MCF 10A (cell line): ENCODE measurements at regions of chr19 and their contacts with region 1.

Region 1: DNA sequence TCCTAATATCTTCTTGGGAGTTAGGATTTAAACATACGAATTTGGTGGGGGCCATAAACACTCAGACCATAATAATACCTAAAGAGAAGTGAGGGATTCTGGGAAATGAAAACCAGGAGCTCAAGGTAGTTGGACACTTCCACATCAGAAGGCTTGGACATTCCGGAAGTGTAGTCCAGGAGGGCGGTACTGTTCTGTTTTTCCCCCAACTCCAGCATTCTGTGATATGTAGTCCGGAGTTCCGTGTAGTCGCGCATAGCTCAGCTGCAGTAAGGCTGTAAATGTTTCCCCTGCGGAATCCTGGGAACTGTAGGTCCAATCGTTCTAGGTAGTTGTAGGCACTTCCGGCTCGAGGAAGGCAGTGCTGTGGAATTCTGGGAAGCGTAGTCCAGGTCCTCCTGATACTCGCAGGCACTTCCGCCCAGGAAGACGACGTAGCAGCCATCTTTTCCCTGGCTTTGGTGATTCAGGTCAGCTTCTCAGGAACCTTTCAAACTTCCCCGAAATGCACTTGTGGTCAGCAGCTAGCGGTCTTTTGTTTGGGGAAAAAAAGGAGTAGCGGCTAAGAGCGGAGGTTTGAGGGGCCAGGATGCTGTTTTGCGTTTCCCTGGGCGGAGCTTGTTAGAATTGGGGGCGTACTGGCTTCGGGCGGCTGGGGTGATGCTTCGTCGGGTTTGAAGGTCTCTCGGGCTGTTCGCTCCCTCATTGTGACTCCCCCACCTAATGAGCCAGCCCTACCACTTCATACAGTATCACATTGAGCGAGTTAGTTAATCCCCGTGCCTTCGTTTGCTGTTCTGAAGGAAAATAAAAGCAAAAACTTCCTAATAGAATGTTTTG is at the start of gene ZNF226:
- DNase-seq: peak; percentile 98
- H3K4me3 Mint-ChIP-seq: peak within 1 kb of the TSS; percentile 98
- H3K27ac Mint-ChIP-seq: peak within 1 kb of the TSS; percentile 96
- H3K4me1 Mint-ChIP-seq: peaks cover 9% of the 10 kb centered on the region
- H3K27me3 Mint-ChIP-seq: no peaks in the 10 kb centered on the region
- CTCF ChIP-seq: no peak
- total RNA-seq, gene ZNF226: 23.4 and 32.5 TPM in 2 replicates

Region 2: DNA sequence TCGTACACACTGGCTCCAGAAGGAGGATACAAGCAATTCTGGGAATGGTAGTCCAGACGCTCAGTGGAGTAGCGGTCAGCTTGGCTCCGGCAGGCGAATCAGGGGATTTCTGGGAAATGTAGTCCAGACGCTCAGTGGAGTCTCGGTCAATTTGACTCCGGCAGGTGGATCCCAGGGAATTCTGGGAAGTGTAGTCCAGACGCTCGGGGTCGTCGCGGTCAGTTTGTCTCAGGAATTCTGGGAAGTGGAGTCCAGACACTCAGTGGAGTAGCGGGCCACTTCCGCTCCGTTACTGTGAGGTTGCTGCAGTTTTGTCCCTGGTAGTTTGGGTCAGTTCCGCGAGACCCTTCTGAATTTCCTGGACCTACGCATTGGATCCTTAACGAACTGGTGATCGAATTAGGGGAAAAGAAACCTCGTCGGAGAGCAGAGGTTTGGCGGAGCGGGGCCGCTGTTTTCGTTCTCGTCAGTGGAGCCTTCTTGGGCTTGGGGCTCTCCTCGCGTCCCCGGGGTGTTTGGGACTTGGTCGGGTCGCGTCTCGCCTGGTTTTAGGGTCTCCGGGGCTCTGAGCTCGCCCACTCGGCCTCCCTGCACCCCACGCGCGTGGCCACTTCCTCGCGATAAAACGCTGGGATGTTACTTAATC is 51.6 kb before region 1 on chr19 and contains the start of gene ZNF225:
- CTCF ChIA-PET with region 1: no interaction called
- POLR2A ChIA-PET with region 1: interaction called, 23 read pairs
- intact Hi-C with region 1: no loop called
- DNase-seq: peak; percentile 99
- H3K4me3 Mint-ChIP-seq: peak within 1 kb of the TSS; percentile 86
- H3K27ac Mint-ChIP-seq: peak within 1 kb of the TSS; percentile 57
- H3K4me1 Mint-ChIP-seq: peaks cover 6% of the 10 kb centered on the region
- H3K27me3 Mint-ChIP-seq: no peaks in the 10 kb centered on the region
- CTCF ChIP-seq: no peak
- total RNA-seq, gene ZNF225: 3.6 and 5.7 TPM in 2 replicates

Region 3: DNA sequence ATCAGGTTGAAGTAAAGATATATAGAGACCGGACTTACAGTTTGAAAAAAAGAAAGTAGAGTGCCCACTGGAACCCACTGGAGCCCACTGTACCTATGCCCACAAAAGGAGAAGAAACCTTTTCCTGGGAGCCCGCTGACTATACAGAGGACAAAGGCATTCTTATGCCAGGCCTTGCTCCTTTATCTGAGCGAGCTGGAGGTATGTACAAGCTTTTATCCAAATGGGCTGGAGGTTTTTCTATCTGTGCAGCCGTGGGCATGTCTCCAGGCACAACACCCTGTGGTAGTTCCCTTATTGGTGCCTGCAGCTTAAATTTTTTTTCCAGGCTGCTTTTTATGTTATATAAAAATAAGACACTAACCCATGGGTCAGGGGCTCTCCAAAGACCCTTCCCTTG is 15.1 kb before region 1 on chr19:
- CTCF ChIA-PET with region 1: no interaction called
- POLR2A ChIA-PET with region 1: interaction called, 10 read pairs
- intact Hi-C with region 1: no loop called
- DNase-seq: no peak
- H3K4me3 Mint-ChIP-seq: no peak overlapping the region
- H3K27ac Mint-ChIP-seq: no peak overlapping the region
- H3K4me1 Mint-ChIP-seq: no peaks in the 10 kb centered on the region
- H3K27me3 Mint-ChIP-seq: no peaks in the 10 kb centered on the region
- CTCF ChIP-seq: no peak

Region 4: DNA sequence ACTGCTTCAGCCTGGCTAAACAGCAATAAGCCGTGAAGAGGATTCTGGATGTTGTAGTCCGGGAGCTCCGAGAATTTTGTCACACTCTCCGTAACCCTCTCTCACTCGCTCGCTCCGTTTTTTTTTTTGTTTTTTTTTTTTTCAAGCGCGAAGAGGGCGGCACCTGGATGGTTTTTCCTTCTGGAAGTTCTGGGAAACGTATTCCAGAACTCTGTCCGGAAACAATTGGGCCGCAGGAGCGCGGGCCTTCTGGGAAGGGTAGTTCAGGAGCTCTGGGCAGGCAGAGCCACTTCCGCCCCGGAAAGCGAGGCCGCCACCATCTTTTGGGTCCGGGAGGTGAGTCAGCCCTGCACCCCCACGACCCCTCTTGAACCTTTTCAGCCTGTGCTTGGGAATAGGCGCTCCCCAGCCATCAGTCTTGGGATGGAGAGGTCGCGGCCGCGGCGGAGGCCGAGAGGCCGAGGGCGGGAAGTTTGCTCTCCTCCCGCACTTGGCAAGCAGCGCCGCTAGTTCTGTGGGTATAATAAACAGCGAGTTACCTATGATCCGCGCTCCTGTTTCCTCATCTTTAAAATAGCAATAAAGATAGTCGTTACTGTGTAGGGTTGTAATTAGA is 47.5 kb after region 1 on chr19 and contains the start of gene ZNF227:
- CTCF ChIA-PET with region 1: interaction called, 3 read pairs
- POLR2A ChIA-PET with region 1: interaction called, 42 read pairs
- intact Hi-C with region 1: loop called (anchors 1 kb)
- DNase-seq: peak; percentile 96
- H3K4me3 Mint-ChIP-seq: peak within 1 kb of the TSS; percentile 94
- H3K27ac Mint-ChIP-seq: peak within 1 kb of the TSS; percentile 92
- H3K4me1 Mint-ChIP-seq: peaks cover 9% of the 10 kb centered on the region
- H3K27me3 Mint-ChIP-seq: no peaks in the 10 kb centered on the region
- CTCF ChIP-seq: no peak
- total RNA-seq, gene ZNF227: 22.6 and 29.0 TPM in 2 replicates

Region 5: DNA sequence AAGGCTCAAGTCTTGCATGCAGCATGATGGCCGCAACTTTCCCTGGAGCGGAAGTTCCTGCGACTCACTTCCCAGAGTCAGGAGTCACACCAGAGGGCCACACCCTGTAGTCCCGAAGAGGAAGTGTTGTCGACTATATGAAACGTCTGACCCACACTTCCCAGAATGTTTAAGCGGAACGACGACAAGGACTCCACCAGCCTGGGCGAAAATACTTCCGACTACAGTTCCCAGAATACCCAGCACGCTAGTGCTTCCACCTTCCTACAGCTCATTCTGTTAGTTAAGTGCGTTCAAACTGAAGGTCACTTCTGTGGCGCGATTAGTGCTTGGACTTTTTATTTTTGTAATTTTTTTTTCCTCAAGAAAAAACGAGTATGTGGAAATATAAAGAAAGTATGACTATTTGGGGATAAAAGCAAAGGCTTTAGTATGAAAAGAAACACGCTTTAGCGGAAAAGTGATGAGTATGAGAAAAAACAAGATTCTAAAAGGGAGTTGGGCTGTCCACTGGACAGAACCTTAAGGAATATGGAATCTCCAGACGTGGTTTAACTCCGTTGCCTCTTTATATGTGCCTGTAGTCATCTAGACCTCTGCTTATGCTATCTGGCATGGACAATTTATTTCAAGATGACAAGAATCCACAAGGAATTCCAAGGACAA is 207.1 kb after region 1 on chr19:
- CTCF ChIA-PET with region 1: no interaction called
- POLR2A ChIA-PET with region 1: no interaction called
- intact Hi-C with region 1: no loop called
- DNase-seq: no peak
- H3K4me3 Mint-ChIP-seq: no peak overlapping the region
- H3K27ac Mint-ChIP-seq: no peak overlapping the region
- H3K4me1 Mint-ChIP-seq: no peaks in the 10 kb centered on the region
- H3K27me3 Mint-ChIP-seq: no peaks in the 10 kb centered on the region
- CTCF ChIP-seq: no peak

Region 6: DNA sequence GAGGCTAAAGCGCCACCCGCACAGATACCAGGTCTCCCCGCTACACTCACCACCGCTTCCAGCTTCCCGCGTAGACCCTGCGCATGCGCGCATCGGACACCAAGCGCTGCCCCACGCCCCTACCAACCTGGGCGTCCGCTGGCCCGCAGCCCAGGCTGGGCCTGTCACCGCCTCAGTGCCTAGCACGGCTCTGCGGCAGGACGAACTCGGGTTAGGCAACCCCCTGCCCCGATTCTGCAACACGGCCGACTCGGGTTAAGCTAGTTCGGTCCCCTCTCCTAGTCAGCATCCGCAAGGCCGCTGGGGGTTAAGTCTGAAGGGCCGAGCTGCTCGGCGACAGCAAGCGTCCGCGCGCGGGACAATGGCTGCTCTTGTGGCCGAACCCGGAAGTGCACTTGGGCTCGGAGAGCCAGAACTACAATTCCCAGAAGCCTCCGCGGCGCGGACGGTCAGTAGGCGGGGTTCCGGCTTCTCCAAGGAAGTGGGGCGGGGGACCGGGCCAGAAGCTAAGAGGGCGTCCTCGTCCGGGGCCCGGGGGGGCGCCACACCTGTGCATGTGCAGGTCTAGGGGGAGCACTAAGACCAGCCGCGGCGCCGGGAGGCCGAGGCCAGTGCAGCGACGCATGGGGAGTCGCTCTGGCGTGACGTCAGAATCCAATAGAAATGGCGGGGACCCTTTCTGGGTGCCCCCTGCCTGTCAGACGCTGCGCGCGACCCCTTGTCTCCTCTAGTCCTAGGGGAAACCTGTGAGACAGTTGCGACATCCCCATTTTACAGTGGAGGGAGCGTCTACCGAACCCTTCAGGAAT is 335.5 kb after region 1 on chr19 and contains the start of gene ZNF180:
- CTCF ChIA-PET with region 1: interaction called, 5 read pairs
- POLR2A ChIA-PET with region 1: interaction called, 3 read pairs
- intact Hi-C with region 1: loop called (anchors 10 kb)
- DNase-seq: peak; percentile 95
- H3K4me3 Mint-ChIP-seq: peak within 1 kb of the TSS; percentile 97
- H3K27ac Mint-ChIP-seq: peak within 1 kb of the TSS; percentile 89
- H3K4me1 Mint-ChIP-seq: peaks cover 19% of the 10 kb centered on the region
- H3K27me3 Mint-ChIP-seq: peaks cover 6% of the 10 kb centered on the region
- CTCF ChIP-seq: peak; percentile 61
- total RNA-seq, gene ZNF180: 3.2 and 4.4 TPM in 2 replicates

Region 7: DNA sequence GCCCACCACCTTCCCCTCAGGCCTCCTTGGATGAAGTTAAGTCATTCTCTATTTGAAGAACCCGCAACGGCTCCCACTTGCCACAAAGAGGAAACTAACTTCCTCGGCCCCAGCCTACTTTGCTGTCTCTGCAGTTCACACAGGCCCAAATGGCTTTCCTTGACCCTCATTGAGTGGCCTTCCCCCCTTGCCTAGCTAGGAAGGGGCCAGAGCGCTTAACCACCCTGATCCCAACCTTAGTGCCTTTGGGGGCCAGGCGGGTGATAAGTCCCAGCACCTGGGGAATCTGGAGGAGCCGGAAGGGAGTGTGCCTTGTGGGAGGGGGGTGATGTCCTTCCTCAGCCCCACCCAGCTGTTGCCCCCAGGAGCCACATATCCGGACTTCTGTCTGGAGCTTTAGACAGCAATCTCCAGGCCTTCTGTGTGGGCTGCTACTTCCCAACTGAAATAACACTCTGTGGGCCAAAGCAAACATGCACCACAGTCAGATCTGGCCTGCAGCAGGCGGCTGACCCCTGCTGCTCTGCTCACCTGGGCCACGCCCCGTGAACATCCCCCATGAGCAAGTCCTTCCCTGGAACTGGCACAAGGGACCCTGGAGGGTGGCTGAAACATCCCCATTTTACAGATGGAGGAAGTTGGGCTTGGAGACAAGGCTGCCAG is 691.7 kb after region 1 on chr19:
- CTCF ChIA-PET with region 1: no interaction called
- POLR2A ChIA-PET with region 1: no interaction called
- intact Hi-C with region 1: no loop called
- DNase-seq: no peak
- H3K4me3 Mint-ChIP-seq: no peak overlapping the region
- H3K27ac Mint-ChIP-seq: no peak overlapping the region
- H3K4me1 Mint-ChIP-seq: peaks cover 6% of the 10 kb centered on the region
- H3K27me3 Mint-ChIP-seq: no peaks in the 10 kb centered on the region
- CTCF ChIP-seq: no peak